ENCODE measurements at regions of chr22 and their contacts with region 1.

Region 1: DNA sequence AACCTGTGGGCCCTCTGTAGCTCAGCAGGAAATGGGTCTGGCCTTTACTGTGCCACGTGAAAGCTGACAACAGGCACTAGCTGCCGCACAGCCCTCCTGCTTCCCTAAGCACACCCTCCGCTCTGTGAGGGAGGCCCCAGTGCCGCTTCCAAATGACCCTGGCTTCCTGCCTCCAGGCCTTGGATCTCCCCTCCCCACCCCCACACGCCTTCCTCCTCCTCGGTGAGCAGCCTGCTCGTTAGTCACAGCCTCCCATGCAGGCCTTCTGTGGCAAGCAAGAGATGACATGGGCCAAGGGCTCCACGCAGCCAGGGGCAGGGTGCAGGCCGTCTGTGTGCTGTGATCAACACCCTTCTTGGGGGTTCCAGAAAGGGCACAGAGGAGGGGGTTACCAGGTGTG is 15.3 kb upstream of the RASL10A start:
- DNase-seq: no peak
- H3K4me3 ChIP-seq: no peak overlapping the region
- H3K27ac ChIP-seq: no peak overlapping the region
- H3K4me1 ChIP-seq: no peaks in the 10 kb centered on the region
- H3K27me3 ChIP-seq: no peaks in the 10 kb centered on the region
- CTCF ChIP-seq: no peak

Region 2: DNA sequence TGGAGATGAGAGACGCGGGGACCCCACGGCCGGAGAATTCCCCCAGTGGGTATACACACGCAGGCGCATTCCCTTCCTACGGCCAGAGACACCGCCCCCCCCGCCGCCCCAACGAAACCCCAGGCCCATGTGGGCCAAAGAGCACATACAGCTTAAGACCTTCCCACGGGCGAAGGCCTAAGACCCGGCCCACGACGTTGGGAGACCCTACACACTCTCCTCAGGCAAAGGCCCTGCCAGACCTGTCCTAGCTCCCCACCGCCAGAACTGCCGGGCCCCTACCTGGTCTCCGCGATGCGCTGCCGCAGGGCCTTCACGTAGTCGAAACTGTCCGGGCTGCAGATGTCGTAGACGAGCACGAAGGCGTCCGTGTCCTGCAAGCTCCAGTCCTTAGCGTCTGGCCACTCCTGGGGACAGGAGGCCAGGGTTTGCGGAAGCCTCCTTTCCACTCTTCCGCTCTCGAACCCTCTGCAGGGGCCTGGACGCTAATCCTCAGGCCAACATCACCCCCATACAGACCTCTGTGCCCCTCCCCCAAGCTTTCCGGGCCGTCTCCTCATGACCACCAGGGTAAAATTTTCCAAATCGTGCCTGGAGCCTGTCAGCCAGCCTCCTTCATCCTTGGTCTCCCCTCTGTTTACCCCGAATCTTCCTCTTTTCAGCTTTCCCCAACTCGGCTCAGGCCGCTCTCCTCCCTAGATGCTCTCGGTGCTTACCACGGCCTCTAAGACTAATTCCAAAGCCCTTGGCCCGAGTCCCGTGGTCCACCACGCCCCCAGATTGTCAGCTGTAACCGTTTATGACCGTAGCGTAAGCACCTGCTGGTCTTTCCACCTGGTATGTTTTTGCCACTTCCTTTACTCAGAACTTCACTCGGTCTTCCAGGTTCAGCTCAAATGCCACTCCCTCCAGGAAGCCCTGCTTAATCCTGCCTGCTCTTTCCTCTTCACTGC is 16.9 kb before region 1 on chr22:
- CTCF ChIA-PET with region 1: interaction called, 11 read pairs
- dilution Hi-C with region 1: no loop called
- in situ Hi-C with region 1: no loop called
- intact Hi-C with region 1: no loop called
- DNase-seq: no peak
- H3K4me3 ChIP-seq: no peak overlapping the region
- H3K27ac ChIP-seq: no peak overlapping the region
- H3K4me1 ChIP-seq: peaks cover 34% of the 10 kb centered on the region
- H3K27me3 ChIP-seq: peaks cover 10% of the 10 kb centered on the region
- CTCF ChIP-seq: no peak

Region 3: DNA sequence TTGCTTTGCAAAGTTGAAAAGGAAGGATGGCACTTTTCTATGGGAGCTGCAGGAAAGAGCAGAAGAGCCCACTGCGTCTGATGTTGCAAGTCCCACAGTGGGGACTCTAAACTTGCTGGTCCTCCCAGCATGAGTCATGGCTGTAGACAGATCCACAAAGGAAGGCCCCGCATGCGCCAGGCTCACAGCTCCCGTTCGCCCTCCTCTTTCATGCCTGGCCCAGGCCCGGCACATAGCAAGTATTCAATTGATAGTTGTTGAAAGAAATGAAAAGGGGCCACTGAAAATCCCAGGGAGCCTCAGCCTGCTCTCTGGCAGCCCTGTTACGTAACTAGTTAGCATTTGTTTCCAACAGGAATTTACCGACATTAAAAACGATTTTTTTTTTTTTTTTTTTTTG is 38.7 kb after region 1 on chr22:
- CTCF ChIA-PET with region 1: no interaction called
- dilution Hi-C with region 1: loop called (anchors 5 kb)
- in situ Hi-C with region 1: no loop called
- intact Hi-C with region 1: no loop called
- DNase-seq: no peak
- H3K4me3 ChIP-seq: no peak overlapping the region
- H3K27ac ChIP-seq: no peak overlapping the region
- H3K4me1 ChIP-seq: no peaks in the 10 kb centered on the region
- H3K27me3 ChIP-seq: no peaks in the 10 kb centered on the region
- CTCF ChIP-seq: no peak

Region 4: GRCh38 chr22:29541845-29542244 is 211.1 kb after region 1 on chr22:
- CTCF ChIA-PET with region 1: no interaction called
- dilution Hi-C with region 1: no loop called
- in situ Hi-C with region 1: no loop called
- intact Hi-C with region 1: no loop called
- DNase-seq: no peak
- H3K4me3 ChIP-seq: no peak overlapping the region
- H3K27ac ChIP-seq: no peak overlapping the region
- H3K4me1 ChIP-seq: no peaks in the 10 kb centered on the region
- H3K27me3 ChIP-seq: no peaks in the 10 kb centered on the region
- CTCF ChIP-seq: no peak

Measured in mammary epithelial cell (primary cell).